Head of caudate nucleus (tissue), 42 donors: ENCODE measurements at regions of chr2 and their contacts with region 1.

Region 1: DNA sequence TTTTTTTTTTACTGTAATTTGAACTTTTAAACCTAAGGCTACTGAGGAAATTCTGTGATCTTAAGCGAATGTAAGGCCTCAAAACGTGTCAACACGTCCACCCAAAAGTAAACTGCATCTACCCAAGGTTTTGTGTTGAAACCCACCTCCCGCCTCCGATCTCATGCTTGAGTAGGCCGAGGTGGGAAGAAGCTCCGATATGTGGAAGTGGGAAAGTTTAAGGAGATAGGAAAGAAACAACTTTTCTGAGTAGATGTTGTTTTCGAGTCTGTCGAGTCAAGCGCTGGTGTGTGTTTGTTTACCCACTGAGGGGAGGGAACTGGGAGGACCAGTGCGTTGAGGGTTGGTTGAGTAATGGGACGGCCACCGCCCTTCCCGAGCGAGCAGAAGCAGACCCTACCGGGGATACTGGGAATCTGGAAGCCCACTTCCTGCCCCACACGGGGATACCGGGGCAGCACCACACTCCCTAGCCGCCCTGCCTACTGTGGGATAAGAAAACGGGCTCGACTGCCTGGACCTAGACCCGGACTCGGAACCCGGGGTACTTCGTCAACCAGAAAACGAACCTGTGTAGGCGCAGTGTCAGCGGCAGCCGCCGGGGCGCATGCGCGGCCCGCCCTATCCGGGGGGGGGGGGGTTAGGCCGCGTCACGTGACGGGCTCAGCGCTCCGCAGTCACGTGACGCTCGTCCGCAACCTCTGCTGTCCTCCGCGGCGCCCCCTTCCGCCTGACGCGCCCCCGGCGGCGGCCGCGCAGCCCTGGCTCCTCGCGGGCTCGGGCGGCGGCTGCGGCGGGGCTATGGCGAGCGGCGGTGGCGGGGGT is at the start of gene RETREG2:
- DNase-seq: peak; percentile 56 to 91 (median 81)

Region 2: GRCh38 chr2:218406209-218406948 is 771.4 kb before region 1 on chr2:
- intact Hi-C with region 1: loop called (anchors 10 kb)
- DNase-seq: peak; percentile 87 to 99 (median 96)

Region 3: GRCh38 chr2:219206442-219207253 is 28.9 kb after region 1 on chr2 and contains the start of gene ZFAND2B:
- intact Hi-C with region 1: loop called (anchors 2 kb)
- DNase-seq: peak; percentile 85 to 99 (median 97)

Region 4: DNA sequence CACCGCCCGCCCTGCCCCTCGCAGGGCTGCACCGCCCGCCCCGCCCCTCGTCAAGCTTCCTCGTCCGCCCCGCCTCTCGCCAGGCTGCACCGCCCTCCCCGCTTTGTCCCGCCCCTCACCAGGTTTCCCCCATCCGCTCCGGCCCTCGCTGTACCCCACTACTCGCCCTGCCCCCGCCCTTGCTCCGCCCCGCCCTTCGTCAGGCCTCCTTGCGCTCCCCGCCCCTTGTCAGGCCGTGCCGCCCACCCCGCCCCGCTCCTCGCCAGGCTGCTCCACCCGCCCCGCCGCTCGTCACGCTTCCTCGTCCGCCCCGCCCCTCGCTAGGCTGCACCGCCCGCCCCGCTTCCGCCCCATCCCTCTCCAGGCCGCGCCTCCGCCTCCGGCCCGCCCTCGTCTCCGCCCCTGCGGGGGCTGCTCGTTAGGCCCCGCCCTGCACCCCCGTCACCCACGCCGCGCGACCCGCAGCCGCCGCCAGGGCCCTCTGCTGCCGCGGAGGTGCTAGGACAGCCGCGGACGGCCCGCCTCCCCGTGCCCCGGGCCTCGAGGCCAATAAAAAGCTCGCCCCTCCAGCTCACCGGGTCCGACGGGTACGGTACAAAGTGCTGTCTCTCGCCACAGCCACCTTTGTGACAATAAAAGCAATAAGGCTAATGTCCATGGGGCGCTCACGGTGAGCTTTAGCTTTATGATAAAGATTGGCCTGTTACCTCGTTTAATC is 210.5 kb after region 1 on chr2:
- intact Hi-C with region 1: loop called (anchors 10 kb)
- DNase-seq: peak; percentile 91 to 100 (median 99)

Region 5: GRCh38 chr2:219430633-219431615 is 253.2 kb after region 1 on chr2:
- intact Hi-C with region 1: no loop called
- DNase-seq: peak in 14 of 42 donors; percentile 21 to 72 (median 36)